Vagina (tissue), 2 donors: ENCODE measurements at regions of chrX and their contacts with region 1.

Region 1: DNA sequence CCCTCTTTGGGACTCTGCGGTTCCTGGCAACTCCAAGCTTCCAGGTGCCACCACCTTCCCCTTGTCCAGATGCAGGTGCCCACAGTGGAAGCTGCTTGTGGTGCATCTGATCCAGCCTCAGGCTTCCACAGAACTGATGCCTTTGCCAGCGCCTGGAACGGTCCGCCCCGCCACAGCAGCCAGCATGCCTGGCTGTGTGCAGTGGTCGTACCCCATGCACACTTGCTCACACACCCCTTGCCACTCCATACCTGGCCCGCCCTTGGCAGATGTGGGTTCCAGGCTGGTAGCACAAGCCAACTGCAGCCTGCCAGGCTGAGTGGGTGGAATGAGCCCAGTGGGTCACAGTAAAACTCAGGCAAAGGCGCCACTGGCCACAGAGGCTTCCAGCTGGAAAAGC is 240.5 kb downstream of the PPP4R3C start:
- DNase-seq: no peak
- H3K4me3 ChIP-seq: no peak overlapping the region
- H3K27ac ChIP-seq: no peak overlapping the region
- H3K4me1 ChIP-seq: no peaks in the 10 kb centered on the region
- H3K27me3 ChIP-seq: no peaks in the 10 kb centered on the region
- CTCF ChIP-seq: no peak
- POLR2A ChIP-seq: no peak

Region 2: DNA sequence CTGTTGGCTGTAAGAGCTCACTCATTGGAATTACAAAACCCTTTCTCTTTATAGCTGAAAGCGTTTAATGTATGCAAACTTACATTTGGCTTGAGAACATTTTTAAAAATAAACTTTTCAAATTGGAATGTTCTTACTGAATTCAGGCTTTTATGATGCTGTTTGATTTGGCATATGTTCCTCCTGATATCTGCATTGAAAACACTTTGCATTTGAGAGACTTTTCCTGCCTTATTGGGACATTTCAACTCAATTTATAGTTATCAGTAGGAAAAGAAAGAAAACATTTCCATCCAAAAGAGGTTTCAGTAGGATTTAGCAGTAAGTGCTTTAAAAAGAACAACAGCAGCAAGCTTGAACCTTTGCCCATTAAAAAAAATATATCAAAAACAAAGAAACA is 1884.6 kb after region 1 on chrX:
- intact Hi-C with region 1: loop called (anchors 10 kb)
- DNase-seq: no peak
- H3K4me3 ChIP-seq: no peak overlapping the region
- H3K27ac ChIP-seq: no peak overlapping the region
- H3K4me1 ChIP-seq: no peaks in the 10 kb centered on the region
- H3K27me3 ChIP-seq: no peaks in the 10 kb centered on the region
- CTCF ChIP-seq: no peak
- POLR2A ChIP-seq: no peak